ENCODE measurements at regions of chr14 and their contacts with region 1.

Region 1: DNA sequence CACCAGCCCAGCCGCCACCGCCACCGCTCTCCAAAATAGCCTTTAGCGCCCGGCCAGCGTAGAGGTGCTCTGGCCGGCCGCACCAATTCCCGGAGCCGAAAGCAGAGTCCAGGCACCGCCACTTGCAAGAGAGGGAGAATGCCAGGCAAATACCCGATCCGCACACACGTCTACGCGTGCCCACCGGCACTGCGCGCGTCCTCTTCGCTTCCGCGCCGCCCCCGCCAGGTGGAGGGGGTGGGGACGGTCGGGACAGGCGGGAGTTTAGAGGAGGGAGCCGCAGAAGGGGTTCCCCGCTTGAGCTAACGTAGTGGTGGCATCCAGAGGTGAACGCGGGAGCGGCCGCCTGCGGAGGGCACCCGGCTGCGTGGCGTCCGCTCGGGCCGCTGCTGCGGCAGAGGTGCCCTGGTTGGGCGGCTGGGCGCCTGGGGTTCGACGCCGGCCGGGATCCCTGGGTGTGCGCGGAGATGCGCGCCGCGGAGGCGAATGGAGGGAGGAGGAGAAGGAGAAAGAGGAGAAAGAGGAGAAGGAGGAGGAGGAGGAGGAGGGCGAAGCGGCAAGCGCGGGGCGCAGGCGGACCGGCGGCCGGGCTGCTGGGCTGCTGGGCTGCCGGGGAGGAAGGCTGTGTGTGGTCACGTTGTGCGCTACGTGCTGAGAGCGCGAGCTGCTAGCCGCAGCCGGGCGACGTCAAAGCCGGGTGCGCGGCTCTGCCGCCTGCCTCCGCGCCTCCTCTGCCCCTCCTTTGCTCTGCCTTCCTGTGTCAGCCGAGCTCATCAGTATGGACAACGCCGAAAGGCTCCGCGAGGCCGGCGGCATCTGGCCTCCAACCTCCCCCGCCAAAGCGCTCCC is at the start of gene MDGA2:
- DNase-seq: no peak
- H3K4me3 Mint-ChIP-seq: no peak within 1 kb of the TSS
- H3K27ac Mint-ChIP-seq: no peak within 1 kb of the TSS
- H3K4me1 Mint-ChIP-seq: no peaks in the 10 kb centered on the region
- H3K27me3 Mint-ChIP-seq: no peaks in the 10 kb centered on the region
- CTCF ChIP-seq: no peak
- total RNA-seq, gene MDGA2: not detected in 2 replicates

Region 2: DNA sequence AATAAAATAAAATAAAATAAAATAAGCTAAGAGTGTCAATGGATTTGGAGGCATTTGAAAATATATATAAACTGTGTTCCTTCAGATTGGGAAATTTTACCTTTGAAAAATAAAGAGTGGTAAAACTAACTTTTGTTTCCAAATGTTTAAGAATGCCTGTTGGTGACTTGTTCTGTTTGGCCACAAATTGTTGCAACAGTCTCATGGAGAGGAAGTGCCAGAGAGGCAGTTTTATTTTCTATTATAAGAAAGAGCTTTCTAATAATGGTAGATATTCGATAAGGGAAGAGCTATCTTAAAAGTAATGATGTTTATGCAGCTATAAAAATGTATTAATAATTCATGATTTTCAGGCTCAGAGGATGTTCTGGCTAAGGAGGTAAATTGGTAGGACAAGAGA is 68.5 kb after region 1 on chr14:
- CTCF ChIA-PET with region 1: no interaction called
- POLR2A ChIA-PET with region 1: no interaction called
- intact Hi-C with region 1: no loop called
- DNase-seq: no peak
- H3K4me3 Mint-ChIP-seq: no peak overlapping the region
- H3K27ac Mint-ChIP-seq: no peak overlapping the region
- H3K4me1 Mint-ChIP-seq: no peaks in the 10 kb centered on the region
- H3K27me3 Mint-ChIP-seq: no peaks in the 10 kb centered on the region
- CTCF ChIP-seq: no peak

Region 3: DNA sequence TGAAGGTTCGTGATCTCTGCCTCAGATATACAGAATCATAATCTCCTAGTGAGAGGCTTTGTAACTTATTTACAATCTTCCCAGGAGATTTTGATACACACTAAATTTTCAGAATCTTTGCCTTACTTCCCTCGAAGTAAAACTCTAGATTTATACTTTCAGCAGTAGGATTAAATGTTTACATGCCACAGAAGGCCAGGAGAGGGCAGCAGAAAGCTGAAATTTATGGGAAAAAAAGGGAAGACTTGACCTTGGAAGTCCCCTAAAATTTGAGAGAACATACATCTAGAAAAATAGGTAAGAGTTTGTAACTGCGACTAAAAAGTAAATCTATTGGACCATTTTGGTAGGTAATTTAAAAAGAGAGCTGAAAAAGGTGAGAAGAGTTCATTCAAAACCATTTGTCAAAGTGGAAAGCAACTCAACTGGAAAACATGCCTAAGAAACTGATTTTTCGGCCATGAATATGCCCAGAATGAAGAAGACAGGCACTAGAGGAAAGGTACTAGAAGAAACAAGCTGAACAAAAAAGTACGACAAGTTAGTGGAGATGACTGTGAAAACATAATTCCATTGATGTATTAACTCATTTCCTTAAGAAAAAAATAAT is 241.8 kb after region 1 on chr14:
- CTCF ChIA-PET with region 1: interaction called, 3 read pairs
- POLR2A ChIA-PET with region 1: no interaction called
- intact Hi-C with region 1: loop called (anchors 5 kb)
- DNase-seq: peak; percentile 43
- H3K4me3 Mint-ChIP-seq: no peak overlapping the region
- H3K27ac Mint-ChIP-seq: no peak overlapping the region
- H3K4me1 Mint-ChIP-seq: no peaks in the 10 kb centered on the region
- H3K27me3 Mint-ChIP-seq: no peaks in the 10 kb centered on the region
- CTCF ChIP-seq: peak; percentile 70